Breast epithelium (tissue), 4 donors: ENCODE measurements at regions of chr12 and their contacts with region 1.

Region 1: GRCh38 chr12:108033090-108033489 is 96.0 kb upstream of the WSCD2 start:
- DNase-seq: no peak
- H3K4me3 ChIP-seq: no peak overlapping the region
- H3K27ac ChIP-seq: no peak overlapping the region
- H3K4me1 ChIP-seq: no peaks in the 10 kb centered on the region
- H3K27me3 ChIP-seq: no peaks in the 10 kb centered on the region
- CTCF ChIP-seq: no peak
- POLR2A ChIP-seq: no peak

Region 2: DNA sequence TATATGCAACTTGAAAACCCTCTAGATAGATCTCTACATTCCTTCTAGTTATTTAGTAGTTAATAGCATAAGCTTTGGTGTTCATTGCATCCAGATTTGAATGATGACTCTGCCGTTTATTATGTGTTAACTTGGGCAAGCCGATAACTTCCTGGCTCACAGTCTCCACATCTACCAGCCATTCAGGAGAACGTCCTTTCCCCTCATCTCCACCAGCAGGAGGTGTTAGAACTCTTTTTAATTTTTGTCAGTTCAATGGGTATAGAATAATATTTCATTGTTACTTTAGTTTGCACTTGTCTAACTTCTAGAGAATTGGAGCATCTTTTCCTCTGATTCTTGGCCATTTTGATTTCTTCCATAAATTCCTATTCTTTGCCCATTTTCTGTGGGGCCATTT is 66.0 kb after region 1 on chr12:
- intact Hi-C with region 1: no loop called
- DNase-seq: no peak
- H3K4me3 ChIP-seq: no peak overlapping the region
- H3K27ac ChIP-seq: no peak overlapping the region
- H3K4me1 ChIP-seq: no peaks in the 10 kb centered on the region
- H3K27me3 ChIP-seq: no peaks in the 10 kb centered on the region
- CTCF ChIP-seq: peak in 1 of 3 donors; percentile 49
- POLR2A ChIP-seq: no peak

Region 3: DNA sequence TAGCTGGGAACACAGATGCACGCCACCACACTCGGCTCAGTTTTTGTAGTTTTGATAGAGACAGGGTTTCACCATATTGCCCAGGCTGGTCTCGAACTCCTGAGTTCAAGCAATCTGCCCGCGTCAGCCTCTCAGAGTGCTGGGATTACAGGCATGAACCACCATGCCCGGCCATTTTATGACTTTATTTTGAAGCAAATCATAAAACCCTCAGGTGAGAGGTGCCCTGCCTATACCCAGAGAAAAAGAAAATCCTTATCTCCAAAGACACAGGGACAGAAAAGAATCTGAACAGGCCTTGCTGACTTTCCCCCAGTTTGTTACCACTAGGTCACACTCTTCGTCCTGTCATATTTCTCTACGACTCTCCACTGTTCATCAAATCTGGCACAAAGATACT is 895.6 kb after region 1 on chr12:
- intact Hi-C with region 1: loop called (anchors 5 kb)
- DNase-seq: no peak
- H3K4me3 ChIP-seq: no peak overlapping the region
- H3K27ac ChIP-seq: no peak overlapping the region
- H3K4me1 ChIP-seq: no peaks in the 10 kb centered on the region
- H3K27me3 ChIP-seq: no peaks in the 10 kb centered on the region
- CTCF ChIP-seq: no peak
- POLR2A ChIP-seq: no peak

Region 4: GRCh38 chr12:109020796-109021380 is 987.8 kb after region 1 on chr12 and contains the start of gene SVOP:
- intact Hi-C with region 1: no loop called
- DNase-seq: peak in 1 of 2 donors; percentile 68
- H3K4me3 ChIP-seq: peak within 1 kb of the TSS in 1 of 3 donors; percentile 10
- H3K27ac ChIP-seq: no peak within 1 kb of the TSS
- H3K4me1 ChIP-seq: no peaks in the 10 kb centered on the region
- H3K27me3 ChIP-seq: peaks cover 0 to 6% of the 10 kb centered on the region in 2 donors
- CTCF ChIP-seq: no peak
- POLR2A ChIP-seq: no peak
- total RNA-seq, gene SVOP: not detected